CD4-positive, alpha-beta memory T cell (primary cell): ENCODE measurements at regions of chr11 and their contacts with region 1.

Region 1: GRCh38 chr11:17063171-17064002 is 14.1 kb downstream of the RPS13 start:
- DNase-seq: peak; percentile 11 to 38 (median 20)
- H3K4me3 ChIP-seq: no peak overlapping the region
- H3K4me3 Mint-ChIP-seq: no peak overlapping the region
- H3K27ac ChIP-seq: no peak overlapping the region
- H3K27ac Mint-ChIP-seq: peak overlapping the region in 1 of 7 donors; percentile 82
- H3K4me1 ChIP-seq: no peaks in the 10 kb centered on the region
- H3K4me1 Mint-ChIP-seq: no peaks in the 10 kb centered on the region
- H3K27me3 ChIP-seq: no peaks in the 10 kb centered on the region
- H3K27me3 Mint-ChIP-seq: no peaks in the 10 kb centered on the region

Region 2: GRCh38 chr11:16935518-16936302 is 127.7 kb before region 1 on chr11:
- CTCF ChIA-PET with region 1: interaction called, 11 read pairs
- POLR2A ChIA-PET with region 1: no interaction called
- intact Hi-C with region 1: loop called (anchors 1 kb)
- DNase-seq: peak in 2 of 5 donors; percentile 11 to 13
- H3K4me3 ChIP-seq: no peak overlapping the region
- H3K4me3 Mint-ChIP-seq: no peak overlapping the region
- H3K27ac ChIP-seq: no peak overlapping the region
- H3K27ac Mint-ChIP-seq: no peak overlapping the region
- H3K4me1 ChIP-seq: no peaks in the 10 kb centered on the region
- H3K4me1 Mint-ChIP-seq: peaks cover 0 to 4% (median 1%) of the 10 kb centered on the region in 4 donors
- H3K27me3 ChIP-seq: no peaks in the 10 kb centered on the region
- H3K27me3 Mint-ChIP-seq: peaks cover 0 to 1% of the 10 kb centered on the region in 2 donors

Region 3: GRCh38 chr11:16969010-16969999 is 94.1 kb before region 1 on chr11:
- CTCF ChIA-PET with region 1: no interaction called
- POLR2A ChIA-PET with region 1: no interaction called
- intact Hi-C with region 1: no loop called
- DNase-seq: no peak
- H3K4me3 ChIP-seq: no peak overlapping the region
- H3K4me3 Mint-ChIP-seq: no peak overlapping the region
- H3K27ac ChIP-seq: no peak overlapping the region
- H3K27ac Mint-ChIP-seq: no peak overlapping the region
- H3K4me1 ChIP-seq: no peaks in the 10 kb centered on the region
- H3K4me1 Mint-ChIP-seq: peaks cover 0 to 5% (median 0%) of the 10 kb centered on the region in 4 donors
- H3K27me3 ChIP-seq: no peaks in the 10 kb centered on the region
- H3K27me3 Mint-ChIP-seq: no peaks in the 10 kb centered on the region

Region 4: GRCh38 chr11:17077520-17078401 is 14.4 kb after region 1 on chr11 and contains the start of gene RPS13:
- CTCF ChIA-PET with region 1: no interaction called
- POLR2A ChIA-PET with region 1: no interaction called
- intact Hi-C with region 1: no loop called
- DNase-seq: peak; percentile 90 to 96 (median 94)
- H3K4me3 ChIP-seq: peak within 1 kb of the TSS; percentile 93 to 94
- H3K4me3 Mint-ChIP-seq: peak within 1 kb of the TSS; percentile 95 to 99 (median 99)
- H3K27ac ChIP-seq: peak within 1 kb of the TSS; percentile 87
- H3K27ac Mint-ChIP-seq: peak within 1 kb of the TSS; percentile 96 to 99 (median 98)
- H3K4me1 ChIP-seq: peaks cover 39% of the 10 kb centered on the region
- H3K4me1 Mint-ChIP-seq: peaks cover 17 to 53% (median 38%) of the 10 kb centered on the region in 4 donors
- H3K27me3 ChIP-seq: no peaks in the 10 kb centered on the region
- H3K27me3 Mint-ChIP-seq: no peaks in the 10 kb centered on the region
- total RNA-seq, gene RPS13: 2,047 to 2,133 TPM